GM12878 (cell line): ENCODE measurements at regions of chr3 and their contacts with region 1.

Region 1: GRCh38 chr3:126752303-126752842 is 48.3 kb downstream of the CHCHD6 start:
- DNase-seq: peak; percentile 30
- ATAC-seq: peak; percentile 100
- H3K4me3 ChIP-seq: no peak overlapping the region
- H3K27ac ChIP-seq: no peak overlapping the region
- H3K4me1 ChIP-seq: no peaks in the 10 kb centered on the region
- H3K27me3 ChIP-seq: no peaks in the 10 kb centered on the region
- CTCF ChIP-seq: peak; percentile 93 to 95 (median 95)
- EP300 ChIP-seq: no peak
- POLR2A ChIP-seq: no peak
- RAD21 ChIP-seq: peak; percentile 99

Region 2: DNA sequence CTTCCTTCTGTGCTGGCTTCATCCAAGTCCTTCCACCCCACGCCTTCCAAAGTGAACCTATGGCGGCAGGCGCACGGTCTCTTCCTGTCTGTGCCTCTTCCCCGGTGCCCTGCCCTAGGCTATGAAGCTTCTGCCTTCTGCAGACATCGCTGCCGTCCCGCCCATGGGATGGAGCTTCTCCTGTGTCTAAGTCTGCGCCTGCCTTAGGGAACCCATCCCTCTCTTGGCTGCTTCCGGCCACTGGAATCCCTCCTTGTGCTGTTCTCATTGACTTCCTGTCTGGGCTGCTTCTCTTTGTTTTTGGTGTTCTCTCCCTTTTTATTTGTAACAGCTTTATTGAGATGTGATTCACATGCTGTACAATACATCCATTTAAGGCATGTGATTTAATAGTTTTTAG is 31.1 kb before region 1 on chr3:
- CTCF ChIA-PET with region 1: no interaction called
- POLR2A ChIA-PET with region 1: no interaction called
- RAD21 ChIA-PET with region 1: no interaction called
- SMC1A ChIA-PET with region 1: no interaction called
- in situ Hi-C with region 1: no loop called
- intact Hi-C with region 1: no loop called
- DNase-seq: no peak
- ATAC-seq: no peak
- H3K4me3 ChIP-seq: no peak overlapping the region
- H3K27ac ChIP-seq: no peak overlapping the region
- H3K4me1 ChIP-seq: no peaks in the 10 kb centered on the region
- H3K27me3 ChIP-seq: no peaks in the 10 kb centered on the region
- CTCF ChIP-seq: no peak
- EP300 ChIP-seq: no peak
- POLR2A ChIP-seq: no peak
- RAD21 ChIP-seq: no peak

Region 3: GRCh38 chr3:126961191-126961790 is 208.9 kb after region 1 on chr3:
- CTCF ChIA-PET with region 1: interaction called, 10 read pairs
- POLR2A ChIA-PET with region 1: no interaction called
- RAD21 ChIA-PET with region 1: no interaction called
- SMC1A ChIA-PET with region 1: no interaction called
- in situ Hi-C with region 1: no loop called
- intact Hi-C with region 1: no loop called
- DNase-seq: no peak
- ATAC-seq: peak; percentile 82
- H3K4me3 ChIP-seq: no peak overlapping the region
- H3K27ac ChIP-seq: no peak overlapping the region
- H3K4me1 ChIP-seq: peaks cover 13% of the 10 kb centered on the region
- H3K27me3 ChIP-seq: no peaks in the 10 kb centered on the region
- CTCF ChIP-seq: no peak
- EP300 ChIP-seq: no peak
- POLR2A ChIP-seq: no peak
- RAD21 ChIP-seq: no peak

Region 4: DNA sequence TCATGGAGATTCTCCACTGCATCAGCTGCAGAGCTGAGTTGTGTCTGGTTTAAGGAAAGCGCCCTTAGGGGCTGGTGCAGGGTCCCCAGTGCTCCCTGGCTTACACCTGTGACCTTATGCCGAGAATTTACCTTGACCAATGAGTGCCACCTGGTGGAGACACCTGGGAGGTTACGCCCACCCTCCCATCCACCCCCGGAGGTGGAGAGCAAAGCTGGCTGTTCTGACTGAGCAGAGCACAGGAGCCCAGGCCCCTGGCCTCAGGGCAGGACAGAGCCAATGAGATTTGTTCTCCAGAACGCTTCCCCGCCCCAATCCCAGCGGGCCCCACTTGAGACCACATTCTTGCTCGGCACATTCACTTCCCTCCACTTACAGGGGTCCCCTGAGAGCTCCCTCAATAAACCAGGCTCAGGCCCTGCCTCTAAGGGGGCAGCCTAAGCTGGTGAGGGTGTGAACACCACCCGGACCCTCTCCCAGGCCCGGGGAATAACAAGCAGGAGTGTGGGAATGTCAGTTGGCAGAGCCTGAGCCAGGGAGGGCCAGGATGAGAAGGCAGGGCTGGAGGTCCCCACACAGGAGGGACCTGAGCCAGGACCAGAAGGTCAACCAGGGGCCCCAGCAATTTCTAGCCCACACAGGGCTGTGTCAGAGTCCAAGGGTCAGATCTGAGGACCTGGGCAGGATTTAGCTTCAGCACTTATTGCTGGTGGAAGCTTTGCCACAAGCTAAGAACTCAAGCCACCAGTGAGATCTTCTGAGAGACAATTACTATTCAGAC is 721.1 kb after region 1 on chr3:
- CTCF ChIA-PET with region 1: interaction called, 9 read pairs
- POLR2A ChIA-PET with region 1: no interaction called
- RAD21 ChIA-PET with region 1: no interaction called
- SMC1A ChIA-PET with region 1: interaction called, 10 read pairs
- in situ Hi-C with region 1: no loop called
- intact Hi-C with region 1: no loop called
- DNase-seq: no peak
- ATAC-seq: peak; percentile 71
- H3K4me3 ChIP-seq: no peak overlapping the region
- H3K27ac ChIP-seq: no peak overlapping the region
- H3K4me1 ChIP-seq: no peaks in the 10 kb centered on the region
- H3K27me3 ChIP-seq: no peaks in the 10 kb centered on the region
- CTCF ChIP-seq: peak; percentile 29 to 47 (median 40); a peak in 5 of 6 replicates
- EP300 ChIP-seq: no peak
- POLR2A ChIP-seq: no peak
- RAD21 ChIP-seq: peak; percentile 52